ENCODE measurements at regions of chr2 and their contacts with region 1.

Region 1: GRCh38 chr2:68925295-68925896 is 27.3 kb downstream of the GKN2 start:
- DNase-seq: peak in 1 of 2 donors; percentile 85
- ATAC-seq: peak in 2 of 3 donors; percentile 82 to 93
- H3K4me3 ChIP-seq: no peak overlapping the region
- H3K4me3 Mint-ChIP-seq: no peak overlapping the region
- H3K27ac ChIP-seq: no peak overlapping the region
- H3K27ac Mint-ChIP-seq: no peak overlapping the region
- H3K4me1 ChIP-seq: no peaks in the 10 kb centered on the region
- H3K4me1 Mint-ChIP-seq: no peaks in the 10 kb centered on the region
- H3K27me3 ChIP-seq: peaks cover 4% of the 10 kb centered on the region
- H3K27me3 Mint-ChIP-seq: peaks cover 15 to 21% of the 10 kb centered on the region in 2 donors
- CTCF ChIP-seq: peak; percentile 94

Region 2: GRCh38 chr2:68487773-68488355 is 437.5 kb before region 1 on chr2:
- intact Hi-C with region 1: loop called (anchors 1 kb)
- DNase-seq: peak in 1 of 2 donors; percentile 56
- ATAC-seq: peak in 2 of 3 donors; percentile 62 to 69
- H3K4me3 ChIP-seq: no peak overlapping the region
- H3K4me3 Mint-ChIP-seq: no peak overlapping the region
- H3K27ac ChIP-seq: no peak overlapping the region
- H3K27ac Mint-ChIP-seq: no peak overlapping the region
- H3K4me1 ChIP-seq: no peaks in the 10 kb centered on the region
- H3K4me1 Mint-ChIP-seq: peaks cover 0 to 5% of the 10 kb centered on the region in 2 donors
- H3K27me3 ChIP-seq: no peaks in the 10 kb centered on the region
- H3K27me3 Mint-ChIP-seq: no peaks in the 10 kb centered on the region
- CTCF ChIP-seq: peak; percentile 47

Region 3: DNA sequence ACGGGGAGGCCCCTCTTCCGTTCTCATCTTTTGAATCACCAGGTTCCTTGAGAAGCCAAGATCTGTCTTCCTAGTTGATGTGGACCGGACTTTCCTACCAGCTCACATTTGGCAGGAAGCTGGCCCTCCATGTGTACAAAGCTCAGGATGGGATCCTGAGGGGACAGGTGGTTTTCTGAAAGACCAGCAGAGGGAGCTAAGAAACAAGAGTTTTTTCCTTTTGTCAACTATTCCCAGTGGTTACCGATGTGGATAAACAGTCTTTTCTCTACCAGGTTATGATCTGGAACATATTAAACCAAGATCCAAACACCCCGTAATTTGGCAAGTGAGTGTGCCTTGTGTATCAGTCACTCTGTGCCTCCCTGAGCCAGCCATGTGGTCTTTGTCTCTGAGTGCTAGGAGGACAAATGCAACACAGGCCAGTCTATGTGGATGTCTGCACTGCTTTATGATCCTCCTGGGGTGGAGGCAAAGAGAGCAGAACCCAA is 215.9 kb before region 1 on chr2:
- intact Hi-C with region 1: loop called (anchors 1 kb)
- DNase-seq: peak in 1 of 2 donors; percentile 65
- ATAC-seq: no peak
- H3K4me3 ChIP-seq: no peak overlapping the region
- H3K4me3 Mint-ChIP-seq: no peak overlapping the region
- H3K27ac ChIP-seq: no peak overlapping the region
- H3K27ac Mint-ChIP-seq: no peak overlapping the region
- H3K4me1 ChIP-seq: peaks cover 3% of the 10 kb centered on the region
- H3K4me1 Mint-ChIP-seq: no peaks in the 10 kb centered on the region
- H3K27me3 ChIP-seq: no peaks in the 10 kb centered on the region
- H3K27me3 Mint-ChIP-seq: peaks cover 52 to 71% of the 10 kb centered on the region in 2 donors
- CTCF ChIP-seq: peak; percentile 75

Region 4: DNA sequence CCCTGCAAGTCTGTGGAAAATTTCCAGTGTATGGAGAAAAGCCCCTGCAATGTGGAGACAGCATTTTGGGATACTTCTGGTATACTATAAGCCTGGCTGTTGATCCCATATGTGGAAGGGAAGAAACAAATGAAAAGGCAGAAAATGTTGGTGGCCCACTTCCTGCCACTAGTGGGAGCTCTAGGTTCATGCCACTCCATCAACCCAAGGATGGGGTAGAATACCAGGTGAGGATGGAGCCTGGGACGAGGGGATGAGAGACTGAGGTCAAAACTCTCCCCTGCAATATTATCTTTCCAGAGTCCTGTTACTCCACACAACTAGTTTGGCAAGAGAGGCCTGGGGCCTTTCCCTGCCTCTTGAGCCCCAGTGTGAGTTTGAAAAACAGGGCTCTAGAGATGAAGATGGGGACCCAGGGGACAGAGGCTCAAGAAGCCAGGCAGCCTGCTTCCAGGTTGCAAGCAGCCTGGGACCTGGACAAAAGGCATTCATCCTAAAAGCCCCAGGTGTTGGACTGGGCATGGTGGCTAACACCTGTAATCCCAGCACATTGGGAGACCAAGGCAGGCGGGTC is 86.0 kb before region 1 on chr2:
- intact Hi-C with region 1: loop called (anchors 1 kb)
- DNase-seq: peak in 1 of 2 donors; percentile 56
- ATAC-seq: peak in 2 of 3 donors; percentile 45 to 53
- H3K4me3 ChIP-seq: no peak overlapping the region
- H3K4me3 Mint-ChIP-seq: no peak overlapping the region
- H3K27ac ChIP-seq: no peak overlapping the region
- H3K27ac Mint-ChIP-seq: no peak overlapping the region
- H3K4me1 ChIP-seq: peaks cover 4% of the 10 kb centered on the region
- H3K4me1 Mint-ChIP-seq: peaks cover 5 to 6% of the 10 kb centered on the region in 2 donors
- H3K27me3 ChIP-seq: no peaks in the 10 kb centered on the region
- H3K27me3 Mint-ChIP-seq: peaks cover 2 to 16% of the 10 kb centered on the region in 2 donors
- CTCF ChIP-seq: peak; percentile 62

Region 5: DNA sequence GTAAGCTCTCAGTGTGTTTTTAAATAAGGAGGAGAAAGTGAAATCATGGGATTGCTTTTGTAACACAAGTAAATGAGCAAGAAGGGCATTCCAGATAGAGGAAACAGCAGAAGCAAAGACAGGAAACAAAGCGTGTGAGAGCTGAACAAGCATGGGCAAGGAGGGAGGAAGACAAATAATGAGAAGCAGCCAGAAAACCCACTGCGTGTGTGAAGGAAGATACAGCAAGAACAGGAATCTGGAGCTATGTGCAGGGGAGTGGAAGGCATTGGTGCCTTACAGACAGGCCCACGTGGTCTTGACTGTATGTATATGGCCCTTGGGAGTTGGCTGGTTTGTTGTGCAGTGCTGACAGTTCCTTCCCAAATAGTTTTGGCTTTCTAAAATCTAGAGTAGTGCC is 629.6 kb after region 1 on chr2:
- intact Hi-C with region 1: no loop called
- DNase-seq: peak in 1 of 2 donors; percentile 28
- ATAC-seq: peak in 1 of 3 donors; percentile 15
- H3K4me3 ChIP-seq: no peak overlapping the region
- H3K4me3 Mint-ChIP-seq: no peak overlapping the region
- H3K27ac ChIP-seq: no peak overlapping the region
- H3K27ac Mint-ChIP-seq: peak overlapping the region; percentile 58 to 75
- H3K4me1 ChIP-seq: peaks cover 7% of the 10 kb centered on the region
- H3K4me1 Mint-ChIP-seq: peaks cover 57 to 60% of the 10 kb centered on the region in 2 donors
- H3K27me3 ChIP-seq: no peaks in the 10 kb centered on the region
- H3K27me3 Mint-ChIP-seq: no peaks in the 10 kb centered on the region
- CTCF ChIP-seq: no peak

Measured in natural killer cell (primary cell).